Heart left ventricle (tissue), 16 donors: ENCODE measurements at regions of chr3 and their contacts with region 1.

Region 1: GRCh38 chr3:4978204-4978965 is 852 bp upstream of the BHLHE40 start:
- DNase-seq: peak; percentile 97 to 99 (median 98)
- ATAC-seq: peak; percentile 75 to 85 (median 77)
- H3K4me3 ChIP-seq: peak overlapping the region; percentile 25 to 100 (median 92)
- H3K27ac ChIP-seq: peak overlapping the region; percentile 95 to 100 (median 100)
- H3K4me1 ChIP-seq: peaks cover 0 to 49% (median 31%) of the 10 kb centered on the region in 12 donors
- H3K27me3 ChIP-seq: no peaks in the 10 kb centered on the region
- CTCF ChIP-seq: peak in 1 of 12 donors; percentile 11
- POLR2A ChIP-seq: peak in 1 of 2 donors; percentile 50

Region 2: GRCh38 chr3:4722103-4722502 is 256.3 kb before region 1 on chr3:
- intact Hi-C with region 1: loop called (anchors 1 to 5 kb)
- DNase-seq: peak in 2 of 5 donors; percentile 56 to 60
- ATAC-seq: peak; percentile 59 to 83 (median 74)
- H3K4me3 ChIP-seq: no peak overlapping the region
- H3K27ac ChIP-seq: peak overlapping the region in 9 of 12 donors; percentile 12 to 73 (median 58)
- H3K4me1 ChIP-seq: peaks cover 0 to 66% (median 41%) of the 10 kb centered on the region in 12 donors
- H3K27me3 ChIP-seq: no peaks in the 10 kb centered on the region
- CTCF ChIP-seq: peak in 10 of 12 donors; percentile 37 to 62 (median 48)
- POLR2A ChIP-seq: no peak

Region 3: DNA sequence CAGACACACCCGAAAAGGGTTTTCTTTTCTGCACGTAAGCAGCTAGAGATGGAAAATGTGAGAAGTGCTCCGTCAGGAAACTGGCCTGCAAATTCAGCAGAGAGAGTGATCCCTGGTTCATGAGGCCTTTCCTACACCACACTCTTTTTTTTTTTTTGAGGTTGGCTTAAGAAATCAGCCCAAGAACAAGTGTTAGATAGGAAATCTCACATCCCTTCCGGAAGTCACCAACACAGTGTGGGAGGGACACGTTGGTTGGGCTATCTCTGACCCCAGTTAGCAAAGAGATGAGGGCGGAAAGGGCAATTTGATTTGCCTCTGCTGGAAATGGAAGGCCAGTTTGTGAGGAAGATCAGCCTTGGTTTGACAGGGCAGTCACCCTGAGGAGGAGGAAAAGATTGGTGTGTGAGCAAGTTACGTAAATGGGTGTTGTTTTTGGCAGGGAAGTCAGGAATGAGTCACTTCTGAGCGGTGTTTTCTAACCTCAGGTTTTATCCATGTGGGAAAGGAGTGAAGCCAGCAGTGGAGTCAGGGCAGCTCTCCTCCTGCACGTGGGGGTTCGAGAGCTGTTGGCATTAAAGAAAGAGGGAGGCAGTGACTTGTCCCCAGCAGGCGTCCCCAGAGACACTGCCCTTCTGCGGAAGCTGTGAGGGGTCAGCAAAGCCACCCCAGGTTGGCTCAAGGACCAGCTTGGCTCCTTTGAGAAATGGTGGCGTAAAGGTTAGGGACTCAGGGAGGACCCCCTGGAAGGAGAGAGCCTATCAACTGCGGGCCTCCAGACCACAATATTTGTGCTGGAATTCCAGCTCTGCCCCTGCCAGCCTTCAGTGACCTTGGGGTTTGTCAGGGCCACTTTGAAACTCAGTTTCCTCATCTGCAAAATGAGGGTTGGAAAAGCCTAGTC is 236.7 kb before region 1 on chr3:
- intact Hi-C with region 1: loop called in 4 of 10 experiments (anchors 5 kb)
- DNase-seq: peak in 4 of 5 donors; percentile 59 to 79 (median 72)
- ATAC-seq: peak; percentile 73 to 89 (median 88)
- H3K4me3 ChIP-seq: peak overlapping the region in 1 of 12 donors; percentile 24
- H3K27ac ChIP-seq: peak overlapping the region; percentile 59 to 97 (median 85)
- H3K4me1 ChIP-seq: peaks cover 9 to 77% (median 41%) of the 10 kb centered on the region in 12 donors
- H3K27me3 ChIP-seq: no peaks in the 10 kb centered on the region
- CTCF ChIP-seq: no peak
- POLR2A ChIP-seq: peak in 1 of 2 donors; percentile 21

Region 4: GRCh38 chr3:4826237-4827100 is 151.9 kb before region 1 on chr3:
- intact Hi-C with region 1: loop called in 6 of 10 experiments (anchors 1 to 5 kb)
- DNase-seq: peak; percentile 86 to 95 (median 88)
- ATAC-seq: peak; percentile 85 to 93 (median 89)
- H3K4me3 ChIP-seq: peak overlapping the region in 5 of 12 donors; percentile 3 to 16 (median 10)
- H3K27ac ChIP-seq: peak overlapping the region; percentile 71 to 93 (median 84)
- H3K4me1 ChIP-seq: peaks cover 7 to 76% (median 40%) of the 10 kb centered on the region in 12 donors
- H3K27me3 ChIP-seq: no peaks in the 10 kb centered on the region
- CTCF ChIP-seq: no peak
- POLR2A ChIP-seq: peak in 1 of 2 donors; percentile 54

Region 5: DNA sequence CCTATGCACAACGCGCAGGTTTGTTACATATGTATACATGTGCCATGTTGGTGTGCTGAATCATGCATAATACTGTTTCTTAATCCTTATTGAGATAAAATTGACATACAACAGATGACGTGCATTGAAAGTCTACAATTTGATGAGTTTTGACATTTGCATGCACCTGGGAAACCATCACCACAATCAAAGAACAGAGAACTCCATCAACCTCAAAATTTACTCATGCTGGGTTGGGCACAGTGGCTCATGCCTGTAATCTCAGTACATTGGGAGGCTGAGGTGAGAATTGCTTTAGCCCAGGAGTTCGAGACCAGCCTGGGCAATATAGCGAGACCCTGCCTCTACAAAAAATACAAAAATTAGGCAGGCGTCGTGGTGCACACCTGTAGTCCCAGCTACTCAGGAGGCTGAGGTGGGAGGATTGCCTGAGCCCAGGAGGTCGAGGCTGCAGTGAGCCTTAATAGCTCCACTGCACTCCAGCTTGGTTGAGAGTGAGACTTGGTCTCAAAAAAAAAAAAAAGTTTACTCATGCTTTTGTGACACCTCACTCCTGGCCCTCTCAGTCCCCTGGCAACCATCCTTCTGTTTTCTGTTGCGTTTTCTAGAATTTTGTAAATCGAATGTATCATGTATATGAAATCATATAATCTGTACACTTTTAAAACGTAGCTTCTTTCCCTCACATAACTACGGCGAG is 57.5 kb after region 1 on chr3:
- intact Hi-C with region 1: no loop called
- DNase-seq: no peak
- ATAC-seq: no peak
- H3K4me3 ChIP-seq: no peak overlapping the region
- H3K27ac ChIP-seq: no peak overlapping the region
- H3K4me1 ChIP-seq: peaks cover 0 to 8% (median 0%) of the 10 kb centered on the region in 12 donors
- H3K27me3 ChIP-seq: no peaks in the 10 kb centered on the region
- CTCF ChIP-seq: no peak
- POLR2A ChIP-seq: no peak

Region 6: GRCh38 chr3:5187156-5187919 is 209.0 kb after region 1 on chr3 and contains the start of gene EDEM1:
- intact Hi-C with region 1: loop called in 1 of 10 experiments (anchors 5 kb)
- DNase-seq: peak; percentile 96 to 99 (median 96)
- ATAC-seq: peak; percentile 94 to 98 (median 96)
- H3K4me3 ChIP-seq: peak within 1 kb of the TSS; percentile 67 to 99 (median 96)
- H3K27ac ChIP-seq: peak within 1 kb of the TSS; percentile 68 to 99 (median 96)
- H3K4me1 ChIP-seq: peaks cover 0 to 79% (median 30%) of the 10 kb centered on the region in 12 donors
- H3K27me3 ChIP-seq: no peaks in the 10 kb centered on the region
- CTCF ChIP-seq: no peak
- POLR2A ChIP-seq: peak; percentile 35 to 82
- total RNA-seq, gene EDEM1: 6.8 to 24.6 (median 10.9) TPM